ENCODE measurements at regions of chr3 and their contacts with region 1.

Region 1: GRCh38 chr3:193465992-193466608 is 87.5 kb upstream of the ATP13A5 start:
- DNase-seq: no peak
- H3K4me3 ChIP-seq: no peak overlapping the region
- H3K27ac ChIP-seq: no peak overlapping the region
- H3K4me1 ChIP-seq: peaks cover 6% of the 10 kb centered on the region
- H3K27me3 ChIP-seq: no peaks in the 10 kb centered on the region
- CTCF ChIP-seq: no peak

Region 2: DNA sequence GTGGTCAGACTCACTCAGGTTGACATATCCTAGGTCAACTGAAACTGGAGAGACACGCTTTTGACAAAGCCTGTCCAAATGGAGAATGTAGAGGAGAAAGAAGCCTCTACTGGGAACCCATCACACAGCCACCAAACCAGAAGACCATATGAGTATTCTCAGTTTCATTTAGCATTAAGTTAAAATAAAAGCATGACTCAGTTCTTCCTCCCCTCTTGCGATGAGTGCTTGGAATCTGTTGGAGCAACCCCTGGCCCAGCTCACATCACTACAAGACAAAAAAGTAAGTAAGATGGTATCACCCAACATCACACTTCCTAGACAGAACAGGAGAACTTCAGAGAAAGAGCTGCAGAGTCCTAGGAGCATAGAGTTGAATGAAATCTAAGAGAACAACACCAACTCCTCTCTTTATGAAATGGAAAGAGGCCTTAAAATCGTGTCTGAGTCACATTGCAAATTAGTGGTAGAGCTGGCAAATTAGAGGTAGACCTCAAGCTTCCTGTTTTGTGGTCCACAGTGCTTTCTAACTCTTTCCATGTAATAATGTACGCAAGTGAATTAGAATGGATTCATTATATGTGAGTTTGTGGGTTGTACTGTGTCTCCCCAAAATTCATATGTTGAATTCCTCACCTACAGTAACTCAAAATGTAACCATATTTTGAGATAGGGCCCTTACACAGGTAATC is 790.0 kb before region 1 on chr3:
- CTCF ChIA-PET with region 1: no interaction called
- POLR2A ChIA-PET with region 1: interaction called, 12 read pairs
- intact Hi-C with region 1: no loop called
- DNase-seq: no peak
- H3K4me3 ChIP-seq: no peak overlapping the region
- H3K27ac ChIP-seq: no peak overlapping the region
- H3K4me1 ChIP-seq: no peaks in the 10 kb centered on the region
- H3K27me3 ChIP-seq: no peaks in the 10 kb centered on the region
- CTCF ChIP-seq: no peak

Region 3: GRCh38 chr3:194084284-194084683 is 618.2 kb after region 1 on chr3:
- CTCF ChIA-PET with region 1: no interaction called
- POLR2A ChIA-PET with region 1: no interaction called
- intact Hi-C with region 1: no loop called
- DNase-seq: no peak
- H3K4me3 ChIP-seq: no peak overlapping the region
- H3K27ac ChIP-seq: no peak overlapping the region
- H3K4me1 ChIP-seq: peaks cover 59% of the 10 kb centered on the region
- H3K27me3 ChIP-seq: no peaks in the 10 kb centered on the region
- CTCF ChIP-seq: no peak

Measured in A673 (cell line).